Astrocyte of the cerebellum (primary cell): ENCODE measurements at regions of chr19 and their contacts with region 1.

Region 1: DNA sequence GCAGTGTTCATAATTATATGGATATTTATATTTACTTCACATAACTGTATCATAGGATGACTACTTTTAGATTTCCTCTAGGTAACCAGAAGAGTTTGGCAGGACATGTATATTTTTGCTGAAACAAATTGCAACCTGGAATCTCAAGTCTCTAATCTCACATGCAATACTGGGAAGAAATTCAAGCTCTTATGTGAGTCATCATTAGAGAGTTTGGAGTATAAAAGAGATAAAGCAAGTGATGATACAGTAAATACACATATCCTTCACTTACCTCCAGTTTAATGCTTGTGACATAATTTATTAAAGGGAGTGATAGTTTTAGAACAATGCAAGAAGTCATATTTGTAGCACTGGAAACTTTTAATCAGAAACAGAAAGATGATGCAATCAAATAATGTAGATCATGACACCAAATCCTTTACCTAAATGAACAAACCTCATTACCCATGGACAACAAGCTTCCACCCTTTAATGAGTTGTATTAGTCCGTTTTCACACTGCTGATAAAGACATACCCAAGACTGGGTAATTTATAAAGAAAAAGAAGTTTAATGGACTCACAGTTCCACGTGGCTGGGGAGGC is 15.8 kb upstream of the OR7A17 start:
- DNase-seq: no peak
- H3K4me3 ChIP-seq: no peak overlapping the region
- CTCF ChIP-seq: no peak

Region 2: DNA sequence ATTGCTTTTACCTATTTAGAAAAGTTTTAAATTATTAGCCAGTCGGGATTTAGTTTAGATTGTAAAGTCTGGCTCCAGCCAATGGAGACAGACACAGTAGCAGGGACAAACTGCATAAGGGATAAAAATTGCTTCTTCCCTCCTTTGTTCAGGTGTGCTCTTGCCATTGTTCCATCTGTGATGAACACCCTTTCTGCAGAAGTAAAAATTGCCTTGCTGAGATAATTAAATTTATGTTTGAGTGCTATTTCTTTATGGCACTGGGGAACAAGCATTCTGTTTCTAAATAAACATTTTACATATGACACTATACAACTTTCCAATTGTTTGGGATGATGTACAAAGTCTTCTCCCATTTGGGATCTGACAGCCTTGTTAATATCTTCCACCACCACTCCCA is 57.5 kb after region 1 on chr19:
- in situ Hi-C with region 1: loop called (anchors 5 kb)
- DNase-seq: no peak
- H3K4me3 ChIP-seq: no peak overlapping the region
- CTCF ChIP-seq: no peak